GM10248 (cell line): ENCODE measurements at regions of chr15 and their contacts with region 1.

Region 1: DNA sequence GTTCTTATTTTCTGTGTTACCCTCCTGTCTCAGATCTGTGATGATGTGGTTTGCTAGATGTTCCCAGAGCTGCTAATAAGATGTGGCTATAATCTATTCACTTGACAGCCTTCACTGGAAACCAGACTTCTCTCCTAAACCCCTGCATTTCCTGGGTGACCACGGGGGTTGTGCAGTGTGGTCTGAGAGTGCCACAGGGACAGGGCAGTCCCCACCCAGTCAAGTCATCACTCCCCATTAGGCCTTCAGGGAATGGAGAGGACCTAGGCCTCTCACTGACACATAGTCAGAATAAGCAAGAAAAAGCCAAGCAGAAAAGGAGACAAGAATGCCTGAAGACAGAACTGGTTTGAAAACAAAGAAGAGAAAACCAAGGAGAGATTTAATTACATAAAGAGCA is 58.3 kb downstream of the GJD2 start:
- DNase-seq: no peak
- CTCF ChIP-seq: no peak

Region 2: DNA sequence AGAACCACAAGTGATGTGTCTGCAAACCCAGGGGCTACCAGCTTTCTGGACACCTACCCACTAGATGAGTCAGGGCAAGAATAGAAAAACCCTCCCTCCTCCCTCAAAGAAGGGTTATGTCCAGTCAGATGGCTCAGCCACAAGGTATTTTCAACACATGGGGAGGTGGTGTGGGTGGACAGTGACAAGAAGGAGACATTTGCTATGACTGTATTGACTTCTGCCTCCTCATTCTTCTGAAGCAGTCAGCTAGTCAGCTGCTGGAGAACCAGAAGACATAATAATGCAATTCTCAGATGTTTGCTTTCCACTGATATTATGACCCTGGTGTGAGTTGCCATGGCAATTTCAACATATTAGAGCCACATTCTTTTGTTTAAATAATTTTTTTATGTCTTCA is 46.3 kb before region 1 on chr15:
- CTCF ChIA-PET with region 1: no interaction called
- POLR2A ChIA-PET with region 1: no interaction called
- DNase-seq: peak; percentile 9
- CTCF ChIP-seq: no peak

Region 3: GRCh38 chr15:34708422-34708821 is 11.9 kb after region 1 on chr15:
- CTCF ChIA-PET with region 1: interaction called, 11 read pairs
- POLR2A ChIA-PET with region 1: no interaction called
- DNase-seq: peak; percentile 24
- CTCF ChIP-seq: peak; percentile 65